CD8-positive, alpha-beta T cell (primary cell): ENCODE measurements at regions of chr2 and their contacts with region 1.

Region 1: DNA sequence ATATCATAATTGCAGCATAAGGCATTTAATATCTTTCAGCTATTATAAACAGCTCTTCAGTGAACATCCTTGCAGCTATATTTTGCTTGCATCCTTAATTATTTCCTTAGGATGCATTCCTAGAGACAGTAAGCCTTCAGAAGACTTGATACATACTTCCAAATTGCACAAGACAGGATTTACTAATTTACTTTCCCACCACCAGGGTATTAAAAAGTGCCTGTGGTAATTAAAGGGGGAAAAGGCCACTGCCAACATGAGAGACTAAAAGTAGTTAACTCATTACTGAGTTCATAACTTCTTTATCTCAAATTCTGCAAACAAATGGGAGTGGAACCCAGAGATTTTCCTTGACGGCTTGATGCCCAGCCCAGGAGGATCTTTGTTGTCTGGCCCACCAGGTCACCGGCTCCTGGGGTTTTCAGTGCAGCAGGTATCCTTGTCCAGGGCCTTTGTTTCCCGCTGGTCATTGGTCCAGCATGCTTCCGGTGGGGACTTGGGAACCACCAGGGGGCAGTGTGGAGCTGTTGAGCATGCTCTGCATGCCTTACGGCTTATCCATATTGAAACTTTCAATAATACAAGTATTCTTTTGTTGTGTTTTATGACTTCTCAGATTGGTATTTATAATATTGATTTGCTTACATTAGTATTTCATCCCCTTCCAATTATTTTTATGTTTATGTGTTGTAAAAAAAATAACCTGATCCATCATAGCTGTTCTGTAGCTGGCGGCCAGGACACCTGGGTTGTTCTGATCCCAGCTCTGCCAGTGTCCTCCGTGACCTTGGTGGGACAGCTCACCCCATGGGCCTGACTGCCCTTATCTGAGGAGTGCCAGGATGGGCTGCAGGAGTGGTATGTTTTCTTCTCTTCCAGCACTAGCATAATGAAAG is 61.4 kb downstream of the TGOLN2 start:
- DNase-seq: peak; percentile 31 to 79 (median 74)
- ATAC-seq: no peak
- H3K4me3 ChIP-seq: no peak overlapping the region
- H3K4me3 Mint-ChIP-seq: no peak overlapping the region
- H3K27ac ChIP-seq: no peak overlapping the region
- H3K27ac Mint-ChIP-seq: no peak overlapping the region
- H3K4me1 ChIP-seq: no peaks in the 10 kb centered on the region
- H3K4me1 Mint-ChIP-seq: no peaks in the 10 kb centered on the region
- H3K27me3 ChIP-seq: no peaks in the 10 kb centered on the region
- H3K27me3 Mint-ChIP-seq: peaks cover 8% of the 10 kb centered on the region
- CTCF ChIP-seq: peak; percentile 89

Region 2: GRCh38 chr2:85255813-85256594 is 10.4 kb before region 1 on chr2:
- CTCF ChIA-PET with region 1: interaction called, 25 read pairs
- POLR2A ChIA-PET with region 1: interaction called, 4 read pairs
- intact Hi-C with region 1: no loop called
- DNase-seq: no peak
- ATAC-seq: no peak
- H3K4me3 ChIP-seq: no peak overlapping the region
- H3K4me3 Mint-ChIP-seq: no peak overlapping the region
- H3K27ac ChIP-seq: no peak overlapping the region
- H3K27ac Mint-ChIP-seq: no peak overlapping the region
- H3K4me1 ChIP-seq: no peaks in the 10 kb centered on the region
- H3K4me1 Mint-ChIP-seq: no peaks in the 10 kb centered on the region
- H3K27me3 ChIP-seq: no peaks in the 10 kb centered on the region
- H3K27me3 Mint-ChIP-seq: no peaks in the 10 kb centered on the region
- CTCF ChIP-seq: no peak

Region 3: DNA sequence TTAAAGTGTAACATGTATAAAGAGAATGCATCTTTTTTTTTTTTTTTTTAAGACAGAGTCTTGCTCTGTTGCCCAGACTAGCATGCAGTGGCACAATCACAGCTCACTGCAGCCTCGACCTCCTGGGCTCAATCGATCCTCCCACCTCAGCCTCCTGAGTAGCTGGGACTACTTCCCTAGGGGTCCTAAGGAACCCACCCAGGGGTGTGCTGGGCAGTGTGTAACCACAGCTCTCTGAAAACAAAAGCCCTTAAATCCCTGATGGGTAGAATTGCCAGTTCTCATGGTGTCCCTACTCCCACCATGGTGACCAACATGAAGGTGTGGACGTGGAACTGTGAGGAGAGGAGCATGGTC is 728.0 kb after region 1 on chr2:
- CTCF ChIA-PET with region 1: no interaction called
- POLR2A ChIA-PET with region 1: no interaction called
- intact Hi-C with region 1: no loop called
- DNase-seq: peak in 1 of 9 experiments; percentile 32
- ATAC-seq: peak; percentile 6
- H3K4me3 ChIP-seq: no peak overlapping the region
- H3K4me3 Mint-ChIP-seq: no peak overlapping the region
- H3K27ac ChIP-seq: peak overlapping the region in 1 of 2 experiments; percentile 52
- H3K27ac Mint-ChIP-seq: peak overlapping the region; percentile 60
- H3K4me1 ChIP-seq: peaks cover 47% of the 10 kb centered on the region
- H3K4me1 Mint-ChIP-seq: peaks cover 36% of the 10 kb centered on the region
- H3K27me3 ChIP-seq: no peaks in the 10 kb centered on the region
- H3K27me3 Mint-ChIP-seq: no peaks in the 10 kb centered on the region
- CTCF ChIP-seq: no peak